ENCODE measurements at regions of chr7 and their contacts with region 1.

Region 1: GRCh38 chr7:145036604-145037405 is 201.0 kb upstream of the TPK1 start:
- DNase-seq: peak; percentile 33 to 54 (median 39)
- ATAC-seq: peak; percentile 53
- H3K4me3 ChIP-seq: no peak overlapping the region
- H3K27ac ChIP-seq: no peak overlapping the region
- H3K4me1 ChIP-seq: peaks cover 6% of the 10 kb centered on the region
- H3K27me3 ChIP-seq: no peaks in the 10 kb centered on the region
- CTCF ChIP-seq: peak; percentile 44 to 77 (median 70)
- POLR2A ChIP-seq: no peak

Region 2: DNA sequence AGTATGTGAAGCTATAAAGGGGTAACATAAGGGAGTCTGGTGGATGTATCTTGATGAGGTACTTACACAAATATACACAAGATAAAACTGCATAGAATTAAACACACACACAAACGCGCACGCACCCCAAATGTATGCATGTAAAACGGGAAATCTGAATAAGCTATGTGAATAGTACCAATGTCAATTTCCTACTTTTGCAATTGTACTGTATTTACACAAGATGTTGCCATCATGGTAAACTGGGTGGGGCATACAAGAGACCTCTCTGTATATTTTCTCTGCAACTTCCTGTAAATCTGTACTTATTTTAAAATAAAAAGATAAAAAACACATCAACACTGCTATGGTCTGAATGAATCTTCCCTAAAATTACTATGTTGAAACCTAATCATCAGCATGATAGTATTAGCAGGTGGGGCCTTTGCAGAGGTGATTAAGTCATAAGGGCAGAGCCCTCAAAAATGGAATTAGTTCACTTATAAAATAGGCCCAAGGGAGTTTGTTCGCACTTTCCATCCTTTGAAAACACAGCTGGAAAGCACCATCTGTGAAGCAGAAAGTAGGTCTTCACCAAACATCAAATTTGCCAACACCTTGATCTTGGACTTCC is 231.1 kb before region 1 on chr7:
- intact Hi-C with region 1: no loop called
- DNase-seq: no peak
- ATAC-seq: no peak
- H3K4me3 ChIP-seq: no peak overlapping the region
- H3K27ac ChIP-seq: no peak overlapping the region
- H3K4me1 ChIP-seq: no peaks in the 10 kb centered on the region
- H3K27me3 ChIP-seq: no peaks in the 10 kb centered on the region
- CTCF ChIP-seq: no peak
- POLR2A ChIP-seq: no peak

Region 3: DNA sequence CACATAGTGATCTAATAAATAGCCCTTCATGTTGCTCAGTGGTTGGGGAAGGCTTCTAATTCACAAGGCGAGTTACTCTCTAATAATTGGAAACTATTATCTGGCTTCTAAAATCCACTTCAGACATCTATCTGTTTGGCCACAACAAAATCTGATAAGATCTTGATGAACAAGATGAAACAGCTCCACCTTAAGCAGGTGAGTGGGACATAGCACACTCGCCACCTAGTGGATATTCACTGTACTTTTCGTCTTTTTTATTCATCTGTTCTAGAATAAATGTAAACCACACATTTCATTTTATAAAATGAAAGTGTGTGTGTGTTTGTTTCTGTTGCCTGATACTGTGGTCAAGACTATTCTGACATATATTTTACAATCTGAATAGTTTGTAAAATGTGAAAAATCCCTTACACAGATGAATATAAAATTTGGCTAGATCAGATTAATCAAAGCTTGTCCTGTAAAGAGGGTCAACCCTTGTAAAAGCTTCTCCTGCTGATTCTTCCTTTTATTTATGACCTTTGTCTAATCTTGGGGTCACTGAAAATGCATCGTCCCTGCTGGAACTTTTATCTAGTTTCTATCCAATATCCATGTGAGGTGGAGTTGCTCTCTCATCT is 1053.3 kb after region 1 on chr7:
- intact Hi-C with region 1: loop called (anchors 10 kb)
- DNase-seq: peak in 2 of 4 donors; percentile 4 to 5
- ATAC-seq: peak; percentile 35
- H3K4me3 ChIP-seq: no peak overlapping the region
- H3K27ac ChIP-seq: no peak overlapping the region
- H3K4me1 ChIP-seq: no peaks in the 10 kb centered on the region
- H3K27me3 ChIP-seq: no peaks in the 10 kb centered on the region
- CTCF ChIP-seq: peak; percentile 26 to 70 (median 62)
- POLR2A ChIP-seq: no peak

Measured in body of pancreas (tissue), 4 donors.